Right lobe of liver (tissue), 6 donors: ENCODE measurements at regions of chr4 and their contacts with region 1.

Region 1: DNA sequence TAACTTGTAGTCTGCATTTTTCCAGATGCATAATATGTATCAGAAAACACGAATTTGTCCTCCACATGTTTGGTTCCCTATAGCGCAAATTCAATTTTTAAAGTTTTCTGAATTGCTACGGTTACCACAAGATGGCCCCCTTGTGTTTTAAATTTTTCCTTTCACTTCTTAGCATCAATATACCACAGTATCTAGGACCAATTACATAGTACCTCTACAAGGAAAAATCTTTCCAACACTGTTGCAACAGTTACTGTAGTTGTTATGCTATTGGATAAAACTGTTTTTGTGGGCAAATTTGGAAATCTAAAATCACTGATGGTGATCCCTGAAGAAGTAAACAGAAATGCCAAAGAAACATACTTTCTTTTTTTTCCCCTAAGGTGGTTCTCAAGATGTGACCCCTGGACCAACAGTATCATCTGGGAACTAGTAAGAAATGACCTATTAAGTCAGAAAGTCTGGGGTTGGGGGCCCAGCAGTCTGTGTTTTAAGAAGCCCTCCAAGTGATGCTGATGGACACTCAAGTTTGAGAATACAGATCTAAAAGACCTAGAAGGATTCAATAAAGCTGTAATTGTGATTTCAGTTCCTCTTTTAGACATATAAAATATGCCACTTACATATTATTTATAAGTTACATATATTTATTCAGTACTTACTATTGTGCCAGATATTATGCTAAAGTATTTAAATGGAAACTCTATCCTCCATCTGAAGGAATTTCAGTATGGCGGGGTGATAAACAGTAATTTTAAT is 3.1 kb downstream of the ZGRF1 start:
- DNase-seq: no peak
- ATAC-seq: no peak
- H3K4me3 ChIP-seq: no peak overlapping the region
- H3K27ac ChIP-seq: no peak overlapping the region
- H3K4me1 ChIP-seq: peaks cover 0 to 15% (median 3%) of the 10 kb centered on the region in 4 donors
- H3K27me3 ChIP-seq: no peaks in the 10 kb centered on the region
- CTCF ChIP-seq: peak; percentile 41 to 53 (median 44)
- POLR2A ChIP-seq: no peak

Region 2: DNA sequence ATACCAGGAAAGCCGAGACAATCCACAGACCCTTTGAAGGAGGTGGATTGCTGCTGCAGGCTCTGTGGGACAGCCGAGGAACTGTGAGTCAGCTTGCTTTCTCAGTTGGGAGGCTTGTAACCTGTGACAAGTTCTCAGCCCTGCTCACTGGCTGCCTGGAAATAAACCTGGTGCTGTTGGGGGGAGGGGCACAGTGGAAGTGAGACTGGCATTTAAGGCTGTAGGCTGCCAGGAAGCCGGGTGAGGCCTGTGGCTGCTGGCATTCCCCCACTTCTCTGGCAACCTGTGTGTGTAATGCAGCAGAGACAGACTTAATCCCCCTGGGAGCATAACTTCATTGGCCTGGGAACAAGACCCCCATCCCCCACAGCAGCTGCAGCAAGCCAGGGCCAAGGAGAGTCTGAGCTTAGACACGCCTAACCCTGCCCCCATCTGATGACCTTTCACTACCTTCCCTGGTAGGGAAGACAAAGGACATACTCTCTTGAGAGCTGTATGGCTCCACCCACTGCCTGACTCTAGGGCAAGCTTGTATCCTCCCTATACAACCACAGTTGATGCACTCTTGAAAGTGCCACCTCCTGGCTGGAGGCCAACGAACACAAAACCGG is 272.4 kb before region 1 on chr4:
- intact Hi-C with region 1: no loop called
- DNase-seq: no peak
- ATAC-seq: no peak
- H3K4me3 ChIP-seq: no peak overlapping the region
- H3K27ac ChIP-seq: no peak overlapping the region
- H3K4me1 ChIP-seq: no peaks in the 10 kb centered on the region
- H3K27me3 ChIP-seq: no peaks in the 10 kb centered on the region
- CTCF ChIP-seq: no peak
- POLR2A ChIP-seq: no peak

Region 3: GRCh38 chr4:112765317-112765975 is 131.8 kb after region 1 on chr4:
- intact Hi-C with region 1: loop called in 1 of 2 experiments (anchors 5 kb)
- DNase-seq: no peak
- ATAC-seq: peak in 2 of 4 donors; percentile 27 to 55
- H3K4me3 ChIP-seq: no peak overlapping the region
- H3K27ac ChIP-seq: no peak overlapping the region
- H3K4me1 ChIP-seq: peaks cover 0 to 5% (median 0%) of the 10 kb centered on the region in 4 donors
- H3K27me3 ChIP-seq: no peaks in the 10 kb centered on the region
- CTCF ChIP-seq: peak in 3 of 4 donors; percentile 34 to 41 (median 38)
- POLR2A ChIP-seq: no peak